ENCODE measurements at regions of chr7 and their contacts with region 1.

Region 1: GRCh38 chr7:149422129-149422913 is 38.5 kb downstream of the ZNF777 start:
- DNase-seq: peak; percentile 54 to 82 (median 77)
- H3K4me3 ChIP-seq: peak overlapping the region; percentile 47 to 60
- H3K4me3 Mint-ChIP-seq: peak overlapping the region; percentile 70 to 83 (median 72)
- H3K27ac ChIP-seq: peak overlapping the region; percentile 54
- H3K27ac Mint-ChIP-seq: peak overlapping the region; percentile 25 to 90 (median 65)
- H3K4me1 ChIP-seq: peaks cover 6% of the 10 kb centered on the region
- H3K4me1 Mint-ChIP-seq: peaks cover 0 to 13% (median 8%) of the 10 kb centered on the region in 4 donors
- H3K27me3 ChIP-seq: no peaks in the 10 kb centered on the region
- H3K27me3 Mint-ChIP-seq: no peaks in the 10 kb centered on the region

Region 2: GRCh38 chr7:149125863-149126661 is 296.3 kb before region 1 on chr7 and contains the start of gene ZNF425:
- CTCF ChIA-PET with region 1: interaction called, 3 read pairs
- POLR2A ChIA-PET with region 1: interaction called, 3 read pairs
- intact Hi-C with region 1: loop called (anchors 2 kb)
- DNase-seq: peak; percentile 89 to 94 (median 91)
- H3K4me3 ChIP-seq: peak within 1 kb of the TSS; percentile 83 to 96
- H3K4me3 Mint-ChIP-seq: peak within 1 kb of the TSS; percentile 91 to 100 (median 100)
- H3K27ac ChIP-seq: peak within 1 kb of the TSS; percentile 88
- H3K27ac Mint-ChIP-seq: peak within 1 kb of the TSS; percentile 91 to 99 (median 98)
- H3K4me1 ChIP-seq: peaks cover 19% of the 10 kb centered on the region
- H3K4me1 Mint-ChIP-seq: peaks cover 15 to 35% (median 25%) of the 10 kb centered on the region in 4 donors
- H3K27me3 ChIP-seq: no peaks in the 10 kb centered on the region
- H3K27me3 Mint-ChIP-seq: no peaks in the 10 kb centered on the region
- total RNA-seq, gene ZNF425: 3.2 to 4.0 TPM

Region 3: DNA sequence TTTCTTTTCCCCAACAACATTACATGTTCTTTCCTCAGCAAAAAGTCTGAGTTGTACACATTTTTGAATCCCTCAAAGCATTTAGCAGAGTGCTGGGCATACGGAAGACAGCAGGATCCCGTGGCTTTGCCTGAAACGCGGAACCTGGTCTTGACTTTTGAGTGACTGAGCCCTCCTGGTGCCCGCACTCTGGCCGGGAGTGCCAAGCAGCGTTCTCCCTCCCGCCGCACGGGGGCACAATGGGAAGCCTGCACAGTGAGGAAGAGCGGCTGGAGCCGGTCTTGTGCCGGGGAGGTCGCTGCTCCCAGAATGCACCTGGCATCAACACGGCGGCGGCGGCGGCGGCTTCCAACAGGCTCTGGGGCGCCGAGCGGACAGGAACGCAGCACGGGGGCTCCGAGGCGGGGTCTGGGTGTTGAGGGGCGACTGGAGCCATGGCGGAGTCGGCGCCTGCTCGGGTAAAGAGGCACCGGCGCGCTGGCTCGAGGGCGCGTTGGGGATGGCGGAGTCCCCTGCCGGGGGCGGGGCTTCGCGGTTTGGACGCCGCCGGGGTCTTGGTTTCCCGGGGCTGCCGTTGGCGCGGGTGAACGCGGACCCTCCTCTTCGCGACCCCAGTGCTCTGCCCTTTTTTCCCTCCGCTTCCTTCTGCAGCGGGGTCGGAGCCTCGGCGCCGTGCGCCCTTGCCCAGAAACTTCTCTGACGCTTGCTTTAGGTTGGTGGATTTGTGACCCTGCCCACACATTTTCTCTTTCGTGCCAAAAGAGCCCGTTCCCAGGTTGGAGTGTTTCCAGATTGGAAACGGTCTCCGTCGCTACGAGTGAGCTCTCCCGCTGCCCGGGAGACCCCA is 182.8 kb before region 1 on chr7 and contains the start of gene ZNF212:
- CTCF ChIA-PET with region 1: interaction called, 3 read pairs
- POLR2A ChIA-PET with region 1: interaction called, 3 read pairs
- intact Hi-C with region 1: loop called (anchors 1 kb)
- DNase-seq: peak; percentile 82 to 88 (median 85)
- H3K4me3 ChIP-seq: peak within 1 kb of the TSS; percentile 89 to 98
- H3K4me3 Mint-ChIP-seq: peak within 1 kb of the TSS; percentile 91 to 94 (median 92)
- H3K27ac ChIP-seq: peak within 1 kb of the TSS; percentile 67
- H3K27ac Mint-ChIP-seq: peak within 1 kb of the TSS; percentile 79 to 93 (median 90)
- H3K4me1 ChIP-seq: peaks cover 26% of the 10 kb centered on the region
- H3K4me1 Mint-ChIP-seq: peaks cover 21 to 39% (median 32%) of the 10 kb centered on the region in 4 donors
- H3K27me3 ChIP-seq: no peaks in the 10 kb centered on the region
- H3K27me3 Mint-ChIP-seq: peaks cover 2 to 5% of the 10 kb centered on the region in 2 donors
- total RNA-seq, gene ZNF212: 21.5 to 24.0 TPM

Region 4: GRCh38 chr7:149284850-149285626 is 137.3 kb before region 1 on chr7:
- CTCF ChIA-PET with region 1: interaction called, 3 read pairs
- POLR2A ChIA-PET with region 1: interaction called, 5 read pairs
- intact Hi-C with region 1: loop called (anchors 1 kb)
- DNase-seq: peak; percentile 96 to 98 (median 98)
- H3K4me3 ChIP-seq: peak overlapping the region; percentile 49 to 72
- H3K4me3 Mint-ChIP-seq: peak overlapping the region; percentile 80 to 96 (median 90)
- H3K27ac ChIP-seq: peak overlapping the region; percentile 57
- H3K27ac Mint-ChIP-seq: peak overlapping the region; percentile 87 to 93 (median 91)
- H3K4me1 ChIP-seq: peaks cover 38% of the 10 kb centered on the region
- H3K4me1 Mint-ChIP-seq: peaks cover 26 to 53% (median 40%) of the 10 kb centered on the region in 4 donors
- H3K27me3 ChIP-seq: no peaks in the 10 kb centered on the region
- H3K27me3 Mint-ChIP-seq: no peaks in the 10 kb centered on the region

Region 5: GRCh38 chr7:149497456-149498261 is 75.3 kb after region 1 on chr7 and contains the start of gene ZNF746:
- CTCF ChIA-PET with region 1: interaction called, 9 read pairs
- POLR2A ChIA-PET with region 1: interaction called, 3 read pairs
- intact Hi-C with region 1: loop called (anchors 1 kb)
- DNase-seq: peak; percentile 77 to 81 (median 78)
- H3K4me3 ChIP-seq: peak within 1 kb of the TSS; percentile 62 to 84
- H3K4me3 Mint-ChIP-seq: peak within 1 kb of the TSS; percentile 92 to 99 (median 95)
- H3K27ac ChIP-seq: peak within 1 kb of the TSS; percentile 63
- H3K27ac Mint-ChIP-seq: peak within 1 kb of the TSS; percentile 91 to 98 (median 96)
- H3K4me1 ChIP-seq: peaks cover 31% of the 10 kb centered on the region
- H3K4me1 Mint-ChIP-seq: peaks cover 21 to 44% (median 27%) of the 10 kb centered on the region in 4 donors
- H3K27me3 ChIP-seq: no peaks in the 10 kb centered on the region
- H3K27me3 Mint-ChIP-seq: no peaks in the 10 kb centered on the region
- total RNA-seq, gene ZNF746: 25.2 to 25.6 TPM

Region 6: GRCh38 chr7:149714050-149714909 is 292.0 kb after region 1 on chr7:
- CTCF ChIA-PET with region 1: no interaction called
- POLR2A ChIA-PET with region 1: no interaction called
- intact Hi-C with region 1: loop called (anchors 1 kb)
- DNase-seq: peak; percentile 80 to 90 (median 82)
- H3K4me3 ChIP-seq: peak overlapping the region; percentile 60 to 72
- H3K4me3 Mint-ChIP-seq: peak overlapping the region; percentile 76 to 87 (median 83)
- H3K27ac ChIP-seq: peak overlapping the region; percentile 62
- H3K27ac Mint-ChIP-seq: peak overlapping the region in 5 of 7 donors; percentile 35 to 85 (median 64)
- H3K4me1 ChIP-seq: peaks cover 23% of the 10 kb centered on the region
- H3K4me1 Mint-ChIP-seq: peaks cover 16 to 31% (median 18%) of the 10 kb centered on the region in 4 donors
- H3K27me3 ChIP-seq: no peaks in the 10 kb centered on the region
- H3K27me3 Mint-ChIP-seq: no peaks in the 10 kb centered on the region

Region 7: GRCh38 chr7:150481186-150481920 is 1059.0 kb after region 1 on chr7:
- CTCF ChIA-PET with region 1: no interaction called
- POLR2A ChIA-PET with region 1: no interaction called
- intact Hi-C with region 1: no loop called
- DNase-seq: peak; percentile 63 to 87 (median 69)
- H3K4me3 ChIP-seq: peak overlapping the region in 1 of 2 donors; percentile 37
- H3K4me3 Mint-ChIP-seq: peak overlapping the region; percentile 80 to 90 (median 88)
- H3K27ac ChIP-seq: peak overlapping the region; percentile 71
- H3K27ac Mint-ChIP-seq: peak overlapping the region; percentile 96 to 100 (median 99)
- H3K4me1 ChIP-seq: peaks cover 99% of the 10 kb centered on the region
- H3K4me1 Mint-ChIP-seq: peaks cover 75 to 98% (median 91%) of the 10 kb centered on the region in 4 donors
- H3K27me3 ChIP-seq: no peaks in the 10 kb centered on the region
- H3K27me3 Mint-ChIP-seq: no peaks in the 10 kb centered on the region